Common myeloid progenitor, CD34-positive (primary cell): ENCODE measurements at regions of chr10 and their contacts with region 1.

Region 1: DNA sequence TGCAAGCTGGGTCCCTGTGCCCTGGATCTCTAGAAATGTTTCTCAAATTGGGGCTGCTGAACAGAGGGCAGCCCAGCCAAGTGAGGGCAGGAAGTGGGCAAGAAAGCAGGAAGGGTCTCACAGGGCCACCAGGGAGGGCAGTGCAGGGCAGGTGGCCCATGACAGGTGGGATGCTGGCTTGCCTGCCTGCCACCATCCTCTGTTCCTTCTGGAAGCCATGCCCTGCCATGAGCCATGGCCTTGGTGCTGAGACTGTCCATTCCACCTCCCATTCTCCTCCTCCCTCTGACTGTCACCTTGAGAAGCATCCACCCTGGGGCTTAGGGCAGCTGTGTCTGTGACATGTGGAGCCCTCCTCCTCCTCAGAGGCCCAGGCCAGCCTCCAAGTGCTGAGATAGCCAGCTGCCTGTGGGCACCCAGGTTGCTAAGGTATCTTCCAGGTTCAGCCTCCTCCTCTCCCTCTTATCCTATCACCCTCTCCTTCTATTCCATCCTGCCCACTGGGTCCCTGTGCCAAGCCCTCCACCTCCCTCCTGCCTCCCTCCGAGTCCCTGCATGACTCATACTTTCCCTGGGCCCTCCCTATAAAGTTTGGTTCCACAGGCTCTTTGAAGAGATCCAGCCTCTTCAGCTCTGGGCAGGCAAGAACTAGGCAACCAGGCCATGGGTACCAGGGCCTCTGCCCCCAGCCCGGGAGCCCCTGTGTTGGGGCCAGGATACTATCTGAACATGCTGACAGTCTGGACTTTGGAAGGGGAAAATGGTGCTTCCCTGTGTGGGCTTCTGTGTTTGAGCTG is 1.3 kb downstream of the VSIR start:
- DNase-seq: peak in 2 of 3 donors; percentile 61 to 62
- H3K4me3 ChIP-seq: peak overlapping the region; percentile 70 to 92 (median 90)
- H3K27ac ChIP-seq: peak overlapping the region; percentile 56 to 81
- H3K4me1 ChIP-seq: peaks cover 47 to 92% (median 91%) of the 10 kb centered on the region in 4 experiments
- H3K27me3 ChIP-seq: no peaks in the 10 kb centered on the region

Region 2: GRCh38 chr10:71696628-71697326 is 75.2 kb before region 1 on chr10:
- CTCF ChIA-PET with region 1: interaction called, 13 read pairs
- POLR2A ChIA-PET with region 1: interaction called, 5 read pairs
- DNase-seq: peak; percentile 37 to 69 (median 47)
- H3K4me3 ChIP-seq: no peak overlapping the region
- H3K27ac ChIP-seq: no peak overlapping the region
- H3K4me1 ChIP-seq: peaks cover 0 to 52% (median 24%) of the 10 kb centered on the region in 4 experiments
- H3K27me3 ChIP-seq: no peaks in the 10 kb centered on the region

Region 3: DNA sequence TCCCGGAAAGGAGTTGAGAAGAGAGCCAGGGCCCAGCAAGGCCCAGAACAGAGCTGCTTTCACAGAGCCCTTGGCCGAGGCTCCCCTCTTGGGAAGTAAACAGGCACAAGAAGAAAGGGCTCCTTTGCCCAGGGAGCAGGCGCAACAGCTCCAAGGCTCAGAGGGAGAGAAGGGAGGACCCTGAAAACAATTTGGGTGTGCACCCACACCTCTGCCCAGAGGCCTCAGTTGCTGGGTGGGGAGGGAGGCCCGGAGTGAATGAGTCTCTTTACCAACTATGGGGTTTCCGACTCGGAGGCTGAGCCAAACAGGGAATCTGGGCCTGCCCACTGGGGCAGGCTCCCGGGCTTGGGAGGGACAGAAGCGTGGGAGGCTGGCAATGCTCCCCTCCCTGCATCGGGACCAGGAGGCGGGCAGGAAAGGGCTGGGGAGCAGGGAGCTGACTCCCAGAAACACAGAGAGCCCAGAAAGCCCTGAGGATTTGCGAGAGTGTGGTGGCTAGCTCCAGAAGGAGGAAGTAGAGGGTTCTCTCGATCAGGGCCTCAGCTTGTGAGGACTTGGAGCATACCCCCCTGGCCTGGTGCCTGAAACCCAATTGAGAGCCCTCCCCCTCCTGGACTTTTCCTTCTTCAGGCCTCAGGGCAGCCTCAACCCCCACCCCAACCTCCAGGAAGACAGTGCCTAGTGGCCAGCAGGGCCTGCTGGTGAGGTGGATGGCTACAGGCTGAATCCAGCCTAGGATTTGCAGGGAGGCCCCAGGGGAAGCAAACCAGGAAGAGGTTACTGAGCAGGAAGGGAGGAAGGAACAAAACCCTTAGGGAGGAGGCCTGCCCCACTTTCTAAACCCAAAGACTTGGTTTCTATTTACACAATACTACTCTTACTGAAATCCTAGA is 58.6 kb before region 1 on chr10:
- CTCF ChIA-PET with region 1: interaction called, 36 read pairs
- POLR2A ChIA-PET with region 1: interaction called, 4 read pairs
- DNase-seq: peak in 2 of 3 donors; percentile 67 to 73
- H3K4me3 ChIP-seq: peak overlapping the region in 2 of 7 experiments; percentile 3 to 19
- H3K27ac ChIP-seq: peak overlapping the region in 1 of 2 experiments; percentile 52
- H3K4me1 ChIP-seq: peaks cover 7 to 69% (median 40%) of the 10 kb centered on the region in 4 experiments
- H3K27me3 ChIP-seq: no peaks in the 10 kb centered on the region

Region 4: GRCh38 chr10:71740069-71740468 is 31.9 kb before region 1 on chr10:
- CTCF ChIA-PET with region 1: interaction called, 159 read pairs
- POLR2A ChIA-PET with region 1: interaction called, 3 read pairs
- DNase-seq: peak in 2 of 3 donors; percentile 22 to 35
- H3K4me3 ChIP-seq: no peak overlapping the region
- H3K27ac ChIP-seq: no peak overlapping the region
- H3K4me1 ChIP-seq: peaks cover 15 to 83% (median 72%) of the 10 kb centered on the region in 4 experiments
- H3K27me3 ChIP-seq: no peaks in the 10 kb centered on the region

Region 5: DNA sequence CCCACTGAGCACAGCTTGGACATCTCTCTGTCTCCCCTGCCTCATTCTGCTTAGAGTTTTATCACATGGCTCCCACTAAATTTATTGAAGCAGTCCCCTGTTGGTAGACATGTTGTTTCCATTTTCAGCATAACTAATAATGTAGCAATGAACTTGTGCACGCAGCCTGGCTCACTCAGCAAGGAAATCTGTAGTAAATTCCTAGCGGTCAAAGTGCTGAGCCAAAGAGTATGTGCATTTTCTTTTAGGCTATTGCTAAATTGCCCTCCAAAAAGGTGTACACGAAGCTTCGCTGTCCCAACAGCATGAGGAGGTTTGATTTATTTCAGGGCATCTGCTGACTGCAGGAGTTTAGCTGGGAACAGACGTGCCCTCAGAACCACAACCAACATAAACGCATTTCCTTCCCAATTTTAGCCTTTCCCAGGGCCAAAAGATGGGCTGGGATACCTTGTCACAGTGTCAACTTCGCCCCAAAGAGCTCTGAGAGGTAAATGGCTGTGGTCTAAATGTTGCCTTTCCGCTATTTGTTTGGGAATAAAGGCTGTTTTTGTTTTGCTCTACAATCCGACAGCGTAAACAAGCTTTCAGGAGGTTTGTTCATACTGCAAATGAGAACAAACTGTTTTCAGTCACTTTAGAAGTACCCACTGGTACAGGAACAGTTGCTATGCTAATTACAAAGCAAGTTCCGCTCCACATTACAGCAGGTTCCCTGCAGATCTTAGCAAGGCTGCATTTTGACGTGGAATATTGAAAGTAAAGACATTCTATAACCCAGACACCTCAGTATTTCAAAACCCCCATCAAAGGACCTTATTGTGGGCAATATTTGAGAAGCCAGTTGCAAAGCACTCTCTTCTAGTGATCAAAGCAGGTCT is 15.5 kb before region 1 on chr10:
- CTCF ChIA-PET with region 1: interaction called, 159 read pairs
- POLR2A ChIA-PET with region 1: interaction called, 9 read pairs
- DNase-seq: peak in 2 of 3 donors; percentile 75 to 80
- H3K4me3 ChIP-seq: peak overlapping the region in 4 of 7 experiments; percentile 34 to 45 (median 40)
- H3K27ac ChIP-seq: peak overlapping the region; percentile 30 to 63
- H3K4me1 ChIP-seq: peaks cover 52 to 88% (median 87%) of the 10 kb centered on the region in 4 experiments
- H3K27me3 ChIP-seq: no peaks in the 10 kb centered on the region

Region 6: GRCh38 chr10:71782917-71783490 is 11.0 kb after region 1 on chr10:
- CTCF ChIA-PET with region 1: interaction called, 11 read pairs
- POLR2A ChIA-PET with region 1: no interaction called
- DNase-seq: peak; percentile 14 to 49 (median 47)
- H3K4me3 ChIP-seq: peak overlapping the region in 2 of 7 experiments; percentile 0 to 40
- H3K27ac ChIP-seq: no peak overlapping the region
- H3K4me1 ChIP-seq: peaks cover 2 to 56% (median 29%) of the 10 kb centered on the region in 4 experiments
- H3K27me3 ChIP-seq: no peaks in the 10 kb centered on the region

Region 7: DNA sequence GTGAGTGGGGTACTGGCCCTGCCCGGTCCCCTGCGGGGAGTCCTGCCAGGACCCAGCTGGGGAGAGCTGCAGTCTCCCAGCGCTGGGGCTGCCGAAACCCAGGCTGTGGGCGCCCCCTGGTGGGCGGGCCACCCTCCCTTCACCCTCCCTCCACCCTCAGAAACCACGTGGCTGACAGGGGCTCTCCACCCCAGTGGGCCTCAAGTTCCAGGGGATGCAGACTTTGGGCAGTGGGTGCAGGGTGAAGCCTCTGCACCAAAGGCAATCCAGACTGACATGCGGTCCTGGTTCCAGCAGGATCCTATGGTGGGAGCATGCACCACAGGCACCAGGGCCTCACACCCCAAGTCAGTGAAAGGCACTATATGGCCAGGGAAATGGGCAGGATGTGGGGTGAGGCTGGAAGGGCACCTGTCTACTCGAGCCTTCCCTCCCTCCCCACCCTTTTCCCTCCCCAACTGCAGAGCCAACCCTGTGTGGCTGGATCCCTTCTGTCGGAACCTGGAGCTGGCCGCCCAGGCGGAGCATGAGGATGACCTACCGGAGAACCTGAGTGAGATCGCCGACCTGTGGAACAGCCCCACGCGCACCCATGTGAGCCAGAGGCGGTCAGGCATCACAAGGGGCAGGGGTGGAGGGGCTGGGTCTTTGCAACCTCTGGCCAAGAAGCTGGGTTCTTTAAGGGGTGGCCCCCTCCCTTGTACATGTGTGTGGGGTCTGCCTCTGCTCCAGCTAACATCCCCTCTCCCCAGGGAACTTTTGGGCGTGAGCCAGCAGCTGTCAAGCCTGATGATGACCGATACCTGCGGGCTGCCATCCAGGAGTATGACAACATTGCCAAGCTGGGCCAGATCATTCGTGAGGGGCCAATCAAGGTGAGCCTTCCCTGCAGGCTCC is 40.2 kb after region 1 on chr10:
- CTCF ChIA-PET with region 1: interaction called, 133 read pairs
- POLR2A ChIA-PET with region 1: no interaction called
- DNase-seq: peak; percentile 62 to 82 (median 78)
- H3K4me3 ChIP-seq: peak overlapping the region in 1 of 7 experiments; percentile 10
- H3K27ac ChIP-seq: no peak overlapping the region
- H3K4me1 ChIP-seq: peaks cover 0 to 18% (median 10%) of the 10 kb centered on the region in 4 experiments
- H3K27me3 ChIP-seq: no peaks in the 10 kb centered on the region

Region 8: GRCh38 chr10:71939861-71940474 is 167.9 kb after region 1 on chr10:
- CTCF ChIA-PET with region 1: no interaction called
- POLR2A ChIA-PET with region 1: no interaction called
- DNase-seq: no peak
- H3K4me3 ChIP-seq: no peak overlapping the region
- H3K27ac ChIP-seq: no peak overlapping the region
- H3K4me1 ChIP-seq: no peaks in the 10 kb centered on the region
- H3K27me3 ChIP-seq: no peaks in the 10 kb centered on the region